ENCODE measurements at regions of chr17 and their contacts with region 1.

Region 1: DNA sequence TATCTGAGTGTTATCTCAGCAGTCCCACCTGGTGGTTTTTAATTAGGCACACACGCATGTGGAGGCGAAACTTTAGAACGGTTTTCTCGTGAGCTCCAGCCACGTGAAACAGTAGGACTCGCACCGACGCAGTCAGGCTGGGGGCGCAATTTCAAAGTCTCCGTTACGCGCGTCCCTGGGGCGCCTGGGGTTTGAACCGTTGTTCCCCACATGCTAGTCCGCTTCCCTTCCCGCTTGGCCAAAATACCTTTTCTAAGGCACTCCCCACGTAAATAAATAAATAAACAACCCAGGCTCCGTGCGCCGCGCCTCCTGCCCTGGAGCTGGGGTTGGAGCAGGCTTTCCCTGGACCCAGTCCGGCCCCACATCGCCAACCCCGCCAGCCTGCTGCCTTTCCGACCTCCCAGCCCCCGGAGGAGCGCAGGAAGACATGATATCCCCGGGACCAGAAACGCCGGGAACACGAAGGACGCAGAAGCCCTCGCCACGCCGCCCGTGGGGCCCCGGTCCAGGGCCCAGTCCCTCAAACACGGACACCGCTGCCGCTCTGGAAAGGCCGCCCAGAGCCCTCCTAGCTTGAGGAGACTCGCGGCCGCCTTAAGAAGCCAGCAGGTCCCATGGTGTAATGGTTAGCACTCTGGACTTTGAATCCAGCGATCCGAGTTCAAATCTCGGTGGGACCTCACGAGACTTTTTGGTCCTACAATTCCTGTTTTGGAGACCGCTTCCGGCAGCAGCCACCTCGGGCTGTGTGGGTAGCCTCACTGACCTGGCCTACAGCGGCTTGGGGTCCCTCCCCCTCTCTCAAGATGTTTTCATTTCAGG is 18.2 kb downstream of the GNGT2 start:
- DNase-seq: peak; percentile 85 to 95 (median 91)
- H3K4me3 ChIP-seq: peak overlapping the region; percentile 48 to 65
- H3K4me3 Mint-ChIP-seq: peak overlapping the region; percentile 89 to 99 (median 91)
- H3K27ac ChIP-seq: peak overlapping the region; percentile 86
- H3K27ac Mint-ChIP-seq: peak overlapping the region; percentile 95 to 100 (median 97)
- H3K4me1 ChIP-seq: peaks cover 15% of the 10 kb centered on the region
- H3K4me1 Mint-ChIP-seq: peaks cover 10 to 45% (median 20%) of the 10 kb centered on the region in 4 donors
- H3K27me3 ChIP-seq: no peaks in the 10 kb centered on the region
- H3K27me3 Mint-ChIP-seq: peaks cover 0 to 6% of the 10 kb centered on the region in 2 donors

Region 2: GRCh38 chr17:48892940-48893645 is 299.0 kb before region 1 on chr17:
- CTCF ChIA-PET with region 1: interaction called, 3 read pairs
- POLR2A ChIA-PET with region 1: interaction called, 6 read pairs
- intact Hi-C with region 1: loop called (anchors 5 kb)
- DNase-seq: peak in 1 of 5 donors; percentile 7
- H3K4me3 ChIP-seq: peak overlapping the region; percentile 80 to 93
- H3K4me3 Mint-ChIP-seq: peak overlapping the region; percentile 86 to 97 (median 93)
- H3K27ac ChIP-seq: peak overlapping the region; percentile 69
- H3K27ac Mint-ChIP-seq: peak overlapping the region; percentile 90 to 98 (median 97)
- H3K4me1 ChIP-seq: peaks cover 22% of the 10 kb centered on the region
- H3K4me1 Mint-ChIP-seq: peaks cover 12 to 27% (median 19%) of the 10 kb centered on the region in 4 donors
- H3K27me3 ChIP-seq: no peaks in the 10 kb centered on the region
- H3K27me3 Mint-ChIP-seq: no peaks in the 10 kb centered on the region

Region 3: GRCh38 chr17:49170216-49170615 is 21.9 kb before region 1 on chr17:
- CTCF ChIA-PET with region 1: no interaction called
- POLR2A ChIA-PET with region 1: no interaction called
- intact Hi-C with region 1: no loop called
- DNase-seq: no peak
- H3K4me3 ChIP-seq: no peak overlapping the region
- H3K4me3 Mint-ChIP-seq: no peak overlapping the region
- H3K27ac ChIP-seq: no peak overlapping the region
- H3K27ac Mint-ChIP-seq: no peak overlapping the region
- H3K4me1 ChIP-seq: no peaks in the 10 kb centered on the region
- H3K4me1 Mint-ChIP-seq: no peaks in the 10 kb centered on the region
- H3K27me3 ChIP-seq: peaks cover 11% of the 10 kb centered on the region
- H3K27me3 Mint-ChIP-seq: peaks cover 50 to 62% of the 10 kb centered on the region in 2 donors

Region 4: GRCh38 chr17:49210158-49211029 is 18.3 kb after region 1 on chr17 and contains the starts of genes ABI3 and GNGT2:
- CTCF ChIA-PET with region 1: interaction called, 17 read pairs
- POLR2A ChIA-PET with region 1: interaction called, 169 read pairs
- intact Hi-C with region 1: loop called (anchors 1 kb)
- DNase-seq: peak; percentile 58 to 71 (median 68)
- H3K4me3 ChIP-seq: peak within 1 kb of the TSS; percentile 77 to 89
- H3K4me3 Mint-ChIP-seq: peak within 1 kb of the TSS; percentile 92 to 98 (median 96)
- H3K27ac ChIP-seq: peak within 1 kb of the TSS; percentile 65
- H3K27ac Mint-ChIP-seq: peak within 1 kb of the TSS; percentile 56 to 95 (median 91)
- H3K4me1 ChIP-seq: peaks cover 71% of the 10 kb centered on the region
- H3K4me1 Mint-ChIP-seq: peaks cover 47 to 72% (median 62%) of the 10 kb centered on the region in 4 donors
- H3K27me3 ChIP-seq: no peaks in the 10 kb centered on the region
- H3K27me3 Mint-ChIP-seq: no peaks in the 10 kb centered on the region
- total RNA-seq, gene ABI3: 9.5 to 11.5 TPM
- total RNA-seq, gene GNGT2: 2.9 to 3.3 TPM

Region 5: GRCh38 chr17:49223517-49224197 is 31.5 kb after region 1 on chr17:
- CTCF ChIA-PET with region 1: interaction called, 120 read pairs
- POLR2A ChIA-PET with region 1: interaction called, 169 read pairs
- intact Hi-C with region 1: loop called (anchors 1 kb)
- DNase-seq: peak; percentile 42 to 55 (median 51)
- H3K4me3 ChIP-seq: peak overlapping the region in 1 of 2 donors; percentile 50
- H3K4me3 Mint-ChIP-seq: peak overlapping the region; percentile 75 to 89 (median 83)
- H3K27ac ChIP-seq: no peak overlapping the region
- H3K27ac Mint-ChIP-seq: peak overlapping the region in 5 of 7 donors; percentile 38 to 80 (median 57)
- H3K4me1 ChIP-seq: peaks cover 45% of the 10 kb centered on the region
- H3K4me1 Mint-ChIP-seq: peaks cover 19 to 50% (median 29%) of the 10 kb centered on the region in 4 donors
- H3K27me3 ChIP-seq: no peaks in the 10 kb centered on the region
- H3K27me3 Mint-ChIP-seq: peaks cover 3 to 7% of the 10 kb centered on the region in 2 donors

Region 6: GRCh38 chr17:49361902-49362722 is 170.0 kb after region 1 on chr17 and contains the start of gene ZNF652:
- CTCF ChIA-PET with region 1: no interaction called
- POLR2A ChIA-PET with region 1: interaction called, 22 read pairs
- intact Hi-C with region 1: loop called (anchors 1 kb)
- DNase-seq: peak; percentile 96 to 98 (median 97)
- H3K4me3 ChIP-seq: peak within 1 kb of the TSS; percentile 48 to 61
- H3K4me3 Mint-ChIP-seq: peak within 1 kb of the TSS; percentile 91 to 98 (median 94)
- H3K27ac ChIP-seq: peak within 1 kb of the TSS; percentile 66
- H3K27ac Mint-ChIP-seq: peak within 1 kb of the TSS; percentile 91 to 98 (median 96)
- H3K4me1 ChIP-seq: peaks cover 62% of the 10 kb centered on the region
- H3K4me1 Mint-ChIP-seq: peaks cover 43 to 64% (median 57%) of the 10 kb centered on the region in 4 donors
- H3K27me3 ChIP-seq: no peaks in the 10 kb centered on the region
- H3K27me3 Mint-ChIP-seq: no peaks in the 10 kb centered on the region
- total RNA-seq, gene ZNF652: 64.2 to 68.6 TPM

Region 7: DNA sequence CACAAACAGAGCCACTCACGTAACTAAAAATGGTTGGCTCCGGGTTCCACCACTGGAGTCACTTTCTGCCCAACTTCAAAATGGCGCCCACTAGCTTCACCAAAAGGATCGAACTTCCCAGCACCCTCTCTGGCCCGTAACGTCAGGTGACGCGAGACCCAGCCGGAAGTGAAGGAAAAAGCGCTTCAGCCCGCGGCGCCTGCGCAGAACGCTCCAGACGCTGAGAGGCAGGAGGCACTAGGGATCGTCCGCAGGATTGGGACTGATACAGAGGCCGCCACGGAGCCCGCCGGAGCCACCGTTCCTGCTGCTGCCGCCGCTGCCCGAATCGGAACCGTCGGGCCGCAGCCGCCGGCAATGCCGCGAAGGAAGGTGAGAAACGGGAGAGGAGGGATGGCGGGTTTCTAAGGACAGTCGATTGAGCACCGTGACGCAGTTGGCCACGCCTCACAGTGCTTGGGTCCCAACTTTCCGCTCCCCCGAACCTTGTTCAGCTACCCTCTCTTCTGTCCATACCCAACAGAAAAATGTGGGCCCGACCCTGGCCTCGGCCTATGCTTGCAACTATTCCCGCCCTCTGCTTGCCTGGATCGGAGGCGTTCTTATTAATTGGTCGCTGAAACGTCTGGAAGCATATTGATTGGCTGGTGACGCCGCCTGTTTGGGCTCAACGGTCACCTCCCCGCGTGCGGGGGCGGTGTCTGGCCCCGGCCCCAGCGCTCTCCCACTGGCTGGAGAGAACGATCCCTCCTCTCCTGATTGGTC is 596.5 kb after region 1 on chr17 and contains the start of gene KAT7:
- CTCF ChIA-PET with region 1: no interaction called
- POLR2A ChIA-PET with region 1: no interaction called
- intact Hi-C with region 1: loop called (anchors 1 kb)
- DNase-seq: peak; percentile 98 to 99 (median 99)
- H3K4me3 ChIP-seq: peak within 1 kb of the TSS; percentile 92 to 96
- H3K4me3 Mint-ChIP-seq: peak within 1 kb of the TSS; percentile 93 to 99 (median 96)
- H3K27ac ChIP-seq: peak within 1 kb of the TSS; percentile 99
- H3K27ac Mint-ChIP-seq: peak within 1 kb of the TSS; percentile 91 to 100 (median 98)
- H3K4me1 ChIP-seq: peaks cover 54% of the 10 kb centered on the region
- H3K4me1 Mint-ChIP-seq: peaks cover 38 to 65% (median 53%) of the 10 kb centered on the region in 4 donors
- H3K27me3 ChIP-seq: no peaks in the 10 kb centered on the region
- H3K27me3 Mint-ChIP-seq: no peaks in the 10 kb centered on the region
- total RNA-seq, gene KAT7: 115 to 120 TPM

Measured in CD4-positive, alpha-beta memory T cell (primary cell).